CD4-positive, alpha-beta memory T cell (primary cell): ENCODE measurements at regions of chr2 and their contacts with region 1.

Region 1: GRCh38 chr2:239380831-239381708 is 19.8 kb downstream of the HDAC4 start:
- DNase-seq: peak; percentile 68 to 87 (median 77)
- H3K4me3 ChIP-seq: peak overlapping the region; percentile 39 to 49
- H3K4me3 Mint-ChIP-seq: peak overlapping the region; percentile 83 to 94 (median 87)
- H3K27ac ChIP-seq: peak overlapping the region; percentile 62
- H3K27ac Mint-ChIP-seq: peak overlapping the region; percentile 90 to 99 (median 96)
- H3K4me1 ChIP-seq: peaks cover 21% of the 10 kb centered on the region
- H3K4me1 Mint-ChIP-seq: peaks cover 17 to 31% (median 19%) of the 10 kb centered on the region in 4 donors
- H3K27me3 ChIP-seq: no peaks in the 10 kb centered on the region
- H3K27me3 Mint-ChIP-seq: no peaks in the 10 kb centered on the region

Region 2: DNA sequence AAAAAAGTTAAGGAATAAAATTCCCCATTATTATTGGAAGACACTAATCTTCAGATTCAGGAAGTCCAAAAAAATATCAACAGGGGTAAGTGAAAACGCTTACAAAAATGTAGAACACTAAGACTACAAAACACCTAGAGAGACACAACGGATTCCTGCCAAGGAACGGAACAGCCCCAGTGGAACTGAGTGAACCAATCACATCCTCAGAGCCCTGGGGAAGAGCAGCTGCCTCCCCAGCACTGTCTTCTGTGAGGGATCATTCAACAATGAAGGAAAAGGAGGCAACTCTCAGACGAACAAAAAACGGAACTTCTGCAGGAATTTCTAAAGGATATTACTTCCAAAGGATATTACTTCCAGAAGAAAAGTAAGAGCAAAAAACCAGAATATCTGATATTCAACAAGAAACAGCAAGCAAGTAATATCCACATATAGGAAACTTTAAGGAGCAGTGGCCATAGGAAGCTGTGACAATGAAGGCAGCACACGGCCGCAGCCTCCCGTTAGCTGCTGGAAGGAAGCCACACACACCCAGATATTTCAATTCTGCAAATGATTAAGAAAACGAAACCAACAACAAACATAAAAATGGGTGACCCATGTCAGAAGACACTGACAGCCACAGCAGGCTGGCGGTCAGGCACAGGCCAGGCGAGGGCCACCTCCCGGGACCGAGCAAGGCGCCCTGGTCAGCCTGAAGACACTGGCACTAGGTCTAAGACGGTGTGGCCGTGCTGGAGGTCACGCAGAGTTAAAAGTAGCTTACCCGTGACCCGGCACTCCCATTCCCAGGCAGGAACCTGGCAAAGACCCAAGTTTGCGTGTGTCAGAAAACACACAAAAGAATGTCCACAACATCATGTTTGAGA is 62.0 kb before region 1 on chr2:
- CTCF ChIA-PET with region 1: no interaction called
- POLR2A ChIA-PET with region 1: interaction called, 20 read pairs
- intact Hi-C with region 1: no loop called
- DNase-seq: no peak
- H3K4me3 ChIP-seq: peak overlapping the region in 1 of 2 donors; percentile 28
- H3K4me3 Mint-ChIP-seq: peak overlapping the region; percentile 73 to 93 (median 80)
- H3K27ac ChIP-seq: peak overlapping the region; percentile 49
- H3K27ac Mint-ChIP-seq: peak overlapping the region; percentile 81 to 96 (median 94)
- H3K4me1 ChIP-seq: peaks cover 44% of the 10 kb centered on the region
- H3K4me1 Mint-ChIP-seq: peaks cover 42 to 78% (median 55%) of the 10 kb centered on the region in 4 donors
- H3K27me3 ChIP-seq: no peaks in the 10 kb centered on the region
- H3K27me3 Mint-ChIP-seq: no peaks in the 10 kb centered on the region

Region 3: GRCh38 chr2:239326831-239327535 is 54.1 kb before region 1 on chr2:
- CTCF ChIA-PET with region 1: no interaction called
- POLR2A ChIA-PET with region 1: interaction called, 20 read pairs
- intact Hi-C with region 1: no loop called
- DNase-seq: peak; percentile 65 to 89 (median 70)
- H3K4me3 ChIP-seq: no peak overlapping the region
- H3K4me3 Mint-ChIP-seq: peak overlapping the region in 7 of 8 donors; percentile 46 to 76 (median 59)
- H3K27ac ChIP-seq: peak overlapping the region; percentile 46
- H3K27ac Mint-ChIP-seq: peak overlapping the region; percentile 89 to 96 (median 95)
- H3K4me1 ChIP-seq: peaks cover 61% of the 10 kb centered on the region
- H3K4me1 Mint-ChIP-seq: peaks cover 43 to 79% (median 59%) of the 10 kb centered on the region in 4 donors
- H3K27me3 ChIP-seq: no peaks in the 10 kb centered on the region
- H3K27me3 Mint-ChIP-seq: no peaks in the 10 kb centered on the region

Region 4: DNA sequence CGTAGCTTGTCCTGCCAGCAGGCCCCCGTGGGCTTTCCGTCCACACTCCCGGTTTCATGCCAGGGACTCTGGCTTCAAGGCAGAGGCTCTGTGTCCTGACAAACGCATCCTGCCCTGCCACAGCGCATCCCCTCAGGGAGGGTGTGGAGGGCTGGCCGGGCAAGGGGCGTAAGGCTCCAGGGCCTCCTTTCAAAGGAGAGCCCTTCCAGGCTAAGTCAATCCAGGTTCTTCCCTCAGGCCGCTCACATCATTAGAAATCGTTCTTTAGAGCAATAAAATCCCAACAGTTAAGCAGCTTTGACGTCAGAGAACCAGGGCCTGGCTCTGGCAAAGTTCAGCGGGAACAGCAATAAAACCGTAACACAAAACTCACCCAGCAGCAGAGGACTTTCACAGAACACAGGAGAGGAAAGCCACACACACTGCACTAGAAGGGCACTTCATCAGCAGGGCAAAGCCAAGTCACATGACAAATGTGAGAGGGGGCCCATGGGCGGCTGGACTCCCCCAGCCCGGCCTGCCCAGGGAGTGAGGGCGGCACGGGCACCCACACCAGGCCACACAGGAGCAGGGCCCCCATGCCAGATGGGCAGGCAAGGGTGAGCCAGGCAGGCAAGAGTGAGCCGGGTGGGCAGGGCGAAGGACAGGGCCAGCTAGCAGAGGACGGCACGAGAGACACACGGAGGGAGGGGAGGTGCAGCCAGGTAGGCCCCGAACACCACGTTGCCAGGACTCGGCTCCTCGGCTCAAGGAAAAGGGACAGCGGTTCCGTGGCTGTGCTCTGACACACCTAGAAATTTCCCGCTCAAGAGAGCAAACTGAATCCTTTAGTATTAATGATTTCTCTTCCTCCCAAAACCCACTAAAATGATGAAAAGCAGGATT is 32.3 kb before region 1 on chr2:
- CTCF ChIA-PET with region 1: no interaction called
- POLR2A ChIA-PET with region 1: no interaction called
- intact Hi-C with region 1: no loop called
- DNase-seq: no peak
- H3K4me3 ChIP-seq: no peak overlapping the region
- H3K4me3 Mint-ChIP-seq: no peak overlapping the region
- H3K27ac ChIP-seq: no peak overlapping the region
- H3K27ac Mint-ChIP-seq: peak overlapping the region in 2 of 7 donors; percentile 15 to 62
- H3K4me1 ChIP-seq: peaks cover 7% of the 10 kb centered on the region
- H3K4me1 Mint-ChIP-seq: peaks cover 0 to 9% (median 0%) of the 10 kb centered on the region in 4 donors
- H3K27me3 ChIP-seq: no peaks in the 10 kb centered on the region
- H3K27me3 Mint-ChIP-seq: no peaks in the 10 kb centered on the region

Region 5: GRCh38 chr2:239411549-239412319 is 30.7 kb after region 1 on chr2:
- CTCF ChIA-PET with region 1: no interaction called
- POLR2A ChIA-PET with region 1: no interaction called
- intact Hi-C with region 1: no loop called
- DNase-seq: no peak
- H3K4me3 ChIP-seq: no peak overlapping the region
- H3K4me3 Mint-ChIP-seq: peak overlapping the region in 2 of 8 donors; percentile 3 to 49
- H3K27ac ChIP-seq: no peak overlapping the region
- H3K27ac Mint-ChIP-seq: peak overlapping the region in 3 of 7 donors; percentile 55 to 72 (median 68)
- H3K4me1 ChIP-seq: peaks cover 26% of the 10 kb centered on the region
- H3K4me1 Mint-ChIP-seq: peaks cover 20 to 37% (median 23%) of the 10 kb centered on the region in 4 donors
- H3K27me3 ChIP-seq: no peaks in the 10 kb centered on the region
- H3K27me3 Mint-ChIP-seq: no peaks in the 10 kb centered on the region

Region 6: GRCh38 chr2:240032406-240033329 is 651.6 kb after region 1 on chr2:
- CTCF ChIA-PET with region 1: no interaction called
- POLR2A ChIA-PET with region 1: no interaction called
- intact Hi-C with region 1: no loop called
- DNase-seq: no peak
- H3K4me3 ChIP-seq: no peak overlapping the region
- H3K4me3 Mint-ChIP-seq: no peak overlapping the region
- H3K27ac ChIP-seq: no peak overlapping the region
- H3K27ac Mint-ChIP-seq: peak overlapping the region in 1 of 7 donors; percentile 60
- H3K4me1 ChIP-seq: no peaks in the 10 kb centered on the region
- H3K4me1 Mint-ChIP-seq: no peaks in the 10 kb centered on the region
- H3K27me3 ChIP-seq: no peaks in the 10 kb centered on the region
- H3K27me3 Mint-ChIP-seq: peaks cover 21 to 23% of the 10 kb centered on the region in 2 donors